ENCODE measurements at regions of chr6 and their contacts with region 1.

Region 1: GRCh38 chr6:56757588-56757984 is 114.9 kb upstream of the DST start:
- DNase-seq: no peak
- ATAC-seq: peak; percentile 67
- H3K4me3 ChIP-seq: no peak overlapping the region
- H3K27ac ChIP-seq: peak overlapping the region in 1 of 2 donors; percentile 30
- H3K4me1 ChIP-seq: peaks cover 0 to 6% of the 10 kb centered on the region in 2 donors
- H3K27me3 ChIP-seq: no peaks in the 10 kb centered on the region

Region 2: DNA sequence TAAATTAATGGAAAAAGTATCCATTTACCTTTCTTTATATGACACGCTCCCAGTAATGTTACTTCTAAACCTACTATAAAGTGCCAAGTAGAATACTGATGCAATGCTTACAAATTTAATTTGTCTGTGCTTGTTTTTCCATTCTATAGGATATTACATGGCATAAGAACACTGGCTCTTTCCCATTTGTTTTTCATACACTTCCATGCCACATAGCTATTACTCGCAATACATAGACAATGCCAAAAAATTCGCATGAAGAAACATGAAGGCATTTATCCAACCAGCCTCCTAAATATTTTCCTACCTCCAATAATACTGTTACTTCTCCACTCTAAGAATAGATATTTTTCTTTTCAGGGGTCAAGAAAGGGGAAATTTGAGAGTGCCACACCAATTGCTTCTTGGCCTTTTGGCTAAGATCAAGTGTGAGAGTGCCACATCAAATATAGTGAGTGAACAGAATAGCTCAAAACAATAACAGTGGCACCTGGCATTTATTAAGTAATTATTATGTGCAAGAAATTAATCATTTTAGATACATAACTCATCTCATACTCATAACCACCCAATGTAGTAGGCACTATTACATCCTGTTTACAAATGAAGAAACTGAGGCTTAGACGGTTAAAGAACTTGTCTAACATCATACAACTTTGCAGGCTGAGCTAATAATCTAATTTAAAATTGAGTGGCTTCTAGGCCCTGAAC is 114.1 kb before region 1 on chr6:
- intact Hi-C with region 1: loop called in 1 of 2 experiments (anchors 2 kb)
- DNase-seq: no peak
- ATAC-seq: no peak
- H3K4me3 ChIP-seq: no peak overlapping the region
- H3K27ac ChIP-seq: no peak overlapping the region
- H3K4me1 ChIP-seq: peaks cover 0 to 3% of the 10 kb centered on the region in 2 donors
- H3K27me3 ChIP-seq: no peaks in the 10 kb centered on the region